CD8-positive, alpha-beta T cell (primary cell): ENCODE measurements at regions of chr1 and their contacts with region 1.

Region 1: GRCh38 chr1:198669023-198669698 is 30.3 kb downstream of the PTPRC start:
- DNase-seq: peak in 5 of 9 experiments; percentile 40 to 85 (median 56)
- ATAC-seq: peak; percentile 77
- H3K4me3 ChIP-seq: peak overlapping the region in 1 of 2 experiments; percentile 8
- H3K4me3 Mint-ChIP-seq: peak overlapping the region; percentile 61
- H3K27ac ChIP-seq: peak overlapping the region; percentile 54 to 97
- H3K27ac Mint-ChIP-seq: peak overlapping the region; percentile 96
- H3K4me1 ChIP-seq: peaks cover 91% of the 10 kb centered on the region
- H3K4me1 Mint-ChIP-seq: peaks cover 90% of the 10 kb centered on the region
- H3K27me3 ChIP-seq: no peaks in the 10 kb centered on the region
- H3K27me3 Mint-ChIP-seq: no peaks in the 10 kb centered on the region
- CTCF ChIP-seq: no peak

Region 2: DNA sequence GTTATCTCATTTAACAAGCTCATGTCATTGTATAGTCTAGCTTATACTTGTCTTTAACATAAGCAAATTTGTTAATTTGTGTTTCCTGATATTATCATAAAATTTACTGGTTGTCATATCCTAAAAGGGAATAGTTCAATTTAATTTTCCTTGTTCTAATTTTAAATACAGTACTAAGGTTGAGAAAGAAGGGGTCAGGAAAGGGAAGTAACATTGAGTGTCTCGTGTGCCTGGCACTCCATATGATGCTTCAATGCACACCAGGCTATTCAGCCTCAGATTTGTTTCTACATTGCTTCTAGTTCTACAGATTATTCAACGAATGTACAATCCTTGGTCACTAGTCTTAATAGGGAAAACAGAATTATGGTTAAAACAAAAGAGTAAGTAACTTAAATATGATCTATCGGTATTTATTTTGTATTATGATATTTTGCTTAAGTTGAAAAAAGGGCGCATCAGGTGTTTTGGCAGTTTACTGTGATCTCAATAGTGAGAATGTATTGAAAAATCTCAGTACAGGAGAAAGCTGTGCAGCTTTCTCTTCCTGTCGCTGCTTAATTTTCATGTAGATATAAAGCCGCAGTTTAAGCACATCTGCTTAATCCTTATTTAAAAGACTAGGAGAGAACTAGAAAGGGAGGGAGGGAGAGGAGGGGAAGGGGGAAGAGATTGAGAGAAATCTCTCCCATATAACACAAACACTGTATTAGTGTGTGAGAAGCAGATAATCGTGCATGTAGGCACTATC is 17.3 kb before region 1 on chr1:
- CTCF ChIA-PET with region 1: interaction called, 4 read pairs
- POLR2A ChIA-PET with region 1: interaction called, 8 read pairs
- intact Hi-C with region 1: loop called (anchors 1 to 2 kb)
- DNase-seq: peak in 1 of 9 experiments; percentile 58
- ATAC-seq: peak; percentile 13
- H3K4me3 ChIP-seq: peak overlapping the region; percentile 29 to 30
- H3K4me3 Mint-ChIP-seq: peak overlapping the region; percentile 75
- H3K27ac ChIP-seq: peak overlapping the region; percentile 41 to 97
- H3K27ac Mint-ChIP-seq: peak overlapping the region; percentile 95
- H3K4me1 ChIP-seq: peaks cover 79% of the 10 kb centered on the region
- H3K4me1 Mint-ChIP-seq: peaks cover 73% of the 10 kb centered on the region
- H3K27me3 ChIP-seq: no peaks in the 10 kb centered on the region
- H3K27me3 Mint-ChIP-seq: no peaks in the 10 kb centered on the region
- CTCF ChIP-seq: no peak

Region 3: DNA sequence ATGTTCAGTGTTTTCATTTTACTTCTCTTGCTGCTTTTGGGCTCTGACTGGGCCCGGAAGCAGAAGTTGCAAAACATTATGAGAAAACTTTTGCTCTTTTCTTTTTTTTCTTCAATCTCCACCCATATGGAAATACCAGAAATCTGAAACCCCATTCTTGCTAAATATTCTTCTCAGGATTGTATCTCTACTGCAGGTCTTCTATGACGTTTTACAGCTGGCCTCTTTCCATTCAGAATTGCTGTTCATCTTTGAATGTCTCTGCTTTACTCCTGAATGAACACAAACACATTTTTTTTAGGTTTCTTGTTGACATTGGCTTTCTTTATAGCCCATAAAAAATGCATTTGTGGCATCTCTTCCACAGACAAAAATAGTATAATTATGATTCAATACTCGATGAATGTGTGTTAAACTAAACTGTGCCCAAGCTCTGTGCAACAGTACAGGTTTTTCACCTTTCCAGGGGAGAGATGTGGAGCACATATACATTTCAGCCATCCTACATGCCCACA is 11.6 kb before region 1 on chr1:
- CTCF ChIA-PET with region 1: interaction called, 4 read pairs
- POLR2A ChIA-PET with region 1: interaction called, 8 read pairs
- intact Hi-C with region 1: loop called (anchors 1 kb)
- DNase-seq: peak in 3 of 9 experiments; percentile 47 to 87 (median 73)
- ATAC-seq: peak; percentile 23
- H3K4me3 ChIP-seq: peak overlapping the region; percentile 18 to 26
- H3K4me3 Mint-ChIP-seq: peak overlapping the region; percentile 74
- H3K27ac ChIP-seq: peak overlapping the region; percentile 64 to 97
- H3K27ac Mint-ChIP-seq: peak overlapping the region; percentile 98
- H3K4me1 ChIP-seq: peaks cover 84% of the 10 kb centered on the region
- H3K4me1 Mint-ChIP-seq: peaks cover 71% of the 10 kb centered on the region
- H3K27me3 ChIP-seq: no peaks in the 10 kb centered on the region
- H3K27me3 Mint-ChIP-seq: no peaks in the 10 kb centered on the region
- CTCF ChIP-seq: no peak

Region 4: GRCh38 chr1:198845851-198846250 is 176.7 kb after region 1 on chr1:
- CTCF ChIA-PET with region 1: no interaction called
- POLR2A ChIA-PET with region 1: no interaction called
- intact Hi-C with region 1: no loop called
- DNase-seq: no peak
- ATAC-seq: no peak
- H3K4me3 ChIP-seq: no peak overlapping the region
- H3K4me3 Mint-ChIP-seq: no peak overlapping the region
- H3K27ac ChIP-seq: no peak overlapping the region
- H3K27ac Mint-ChIP-seq: no peak overlapping the region
- H3K4me1 ChIP-seq: no peaks in the 10 kb centered on the region
- H3K4me1 Mint-ChIP-seq: no peaks in the 10 kb centered on the region
- H3K27me3 ChIP-seq: no peaks in the 10 kb centered on the region
- H3K27me3 Mint-ChIP-seq: no peaks in the 10 kb centered on the region
- CTCF ChIP-seq: no peak